Psoas muscle (tissue), 8 donors: ENCODE measurements at regions of chr5 and their contacts with region 1.

Region 1: DNA sequence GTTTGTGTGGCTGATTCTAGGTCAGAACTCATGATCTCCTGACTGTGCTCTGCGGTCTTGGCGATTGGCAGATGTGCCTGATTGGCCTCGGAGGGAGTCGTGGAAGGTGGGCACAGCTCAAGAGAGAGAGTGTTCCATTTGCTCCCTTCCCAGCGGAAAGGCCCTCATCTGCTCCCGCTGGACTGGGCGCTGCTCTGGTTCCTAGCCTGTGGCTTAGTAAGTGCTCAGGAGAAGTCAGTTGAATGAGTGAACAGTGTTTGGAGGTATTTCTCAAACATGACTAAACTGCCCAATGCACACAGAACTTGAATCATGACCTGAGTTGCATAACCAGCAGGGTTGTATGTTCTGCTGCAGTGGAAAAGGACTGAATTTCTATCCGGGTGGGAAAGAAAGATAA is 120.2 kb upstream of the PITX1 start:
- DNase-seq: no peak
- ATAC-seq: no peak
- H3K4me3 ChIP-seq: no peak overlapping the region
- H3K27ac ChIP-seq: no peak overlapping the region
- H3K4me1 ChIP-seq: no peaks in the 10 kb centered on the region
- H3K27me3 ChIP-seq: no peaks in the 10 kb centered on the region
- CTCF ChIP-seq: no peak

Region 2: DNA sequence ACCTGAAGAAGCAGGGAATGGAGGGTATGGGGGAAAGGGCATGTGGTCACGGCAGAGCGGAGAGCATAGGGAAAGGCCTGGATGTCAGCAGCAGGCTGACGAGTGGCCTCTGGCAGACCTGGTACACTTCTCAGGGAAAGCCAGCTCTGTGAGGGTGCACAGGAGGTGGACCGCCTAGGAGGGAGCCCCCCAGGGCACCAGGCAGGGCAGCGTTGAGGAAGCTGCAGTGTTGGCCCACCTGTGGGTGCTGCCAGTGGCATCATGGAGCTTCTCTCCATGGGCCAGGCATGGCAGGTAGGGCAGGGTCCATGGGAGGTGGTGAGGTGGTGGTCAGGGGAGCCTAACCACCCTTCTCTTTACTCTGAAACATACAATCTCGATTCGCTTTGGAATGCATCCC is 22.8 kb after region 1 on chr5:
- intact Hi-C with region 1: loop called in 1 of 2 experiments (anchors 2 kb)
- DNase-seq: no peak
- ATAC-seq: no peak
- H3K4me3 ChIP-seq: no peak overlapping the region
- H3K27ac ChIP-seq: no peak overlapping the region
- H3K4me1 ChIP-seq: no peaks in the 10 kb centered on the region
- H3K27me3 ChIP-seq: no peaks in the 10 kb centered on the region
- CTCF ChIP-seq: no peak